ENCODE measurements at regions of chr19 and their contacts with region 1.

Region 1: GRCh38 chr19:41327576-41328156 is 17.7 kb downstream of the CCDC97 start:
- DNase-seq: peak in 2 of 5 donors; percentile 43 to 47
- H3K4me3 ChIP-seq: no peak overlapping the region
- H3K27ac ChIP-seq: no peak overlapping the region
- H3K4me1 ChIP-seq: peaks cover 25% of the 10 kb centered on the region
- H3K27me3 ChIP-seq: no peaks in the 10 kb centered on the region
- CTCF ChIP-seq: no peak
- EP300 ChIP-seq: no peak
- POLR2A ChIP-seq: no peak

Region 2: DNA sequence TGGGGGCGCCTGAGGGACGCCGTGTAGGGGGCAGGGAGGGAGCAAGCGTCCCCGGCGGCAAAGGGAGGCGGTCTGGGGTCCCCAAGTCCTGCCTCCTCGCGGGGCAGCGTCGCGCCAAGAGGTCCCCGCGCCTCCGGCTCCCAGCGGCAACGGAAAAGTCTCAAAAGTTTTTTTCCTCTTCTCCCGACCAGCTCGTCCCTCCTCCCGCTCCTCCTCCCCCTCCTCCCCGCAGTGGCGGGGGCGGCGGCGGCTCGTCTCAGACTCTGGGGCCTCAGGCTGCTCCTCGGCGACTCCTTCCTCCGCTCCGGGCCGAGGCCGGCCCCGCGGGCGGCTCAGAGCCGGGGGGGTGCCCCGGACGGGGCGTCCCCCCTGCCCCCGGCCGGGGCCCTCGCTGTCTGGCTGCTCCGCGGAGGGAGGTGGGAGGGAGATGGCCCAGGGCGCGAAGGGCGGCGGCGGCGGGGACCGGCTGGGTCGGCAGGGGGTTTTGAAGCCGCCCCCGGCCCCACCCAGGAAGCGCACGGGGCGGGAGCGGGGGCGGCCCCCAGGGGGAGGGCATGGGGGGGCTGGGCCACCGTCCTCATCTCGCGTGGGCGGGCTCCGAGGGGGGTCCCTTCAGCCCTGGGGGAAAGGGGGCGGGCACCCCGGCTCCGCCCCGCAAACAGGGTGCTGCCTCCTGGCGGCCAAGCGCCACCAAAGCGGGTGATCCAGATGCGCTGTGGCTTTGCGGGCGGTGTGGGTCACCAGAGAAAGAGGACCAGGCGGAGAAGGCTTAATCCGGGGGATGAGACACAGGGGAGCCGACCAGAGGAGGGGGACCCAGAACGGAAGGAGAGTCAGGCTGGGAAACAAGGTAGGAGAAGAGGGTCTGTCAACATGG is 26.0 kb after region 1 on chr19 and contains the start of gene TGFB1:
- intact Hi-C with region 1: loop called in 1 of 4 experiments (anchors 2 kb)
- DNase-seq: peak; percentile 80 to 89 (median 87)
- H3K4me3 ChIP-seq: peak within 1 kb of the TSS; percentile 60
- H3K27ac ChIP-seq: peak within 1 kb of the TSS; percentile 65 to 77
- H3K4me1 ChIP-seq: peaks cover 12% of the 10 kb centered on the region
- H3K27me3 ChIP-seq: no peaks in the 10 kb centered on the region
- CTCF ChIP-seq: peak; percentile 80 to 91 (median 89)
- EP300 ChIP-seq: no peak
- POLR2A ChIP-seq: peak; percentile 57
- total RNA-seq, gene TGFB1: 9.1 to 31.8 (median 22.1) TPM

Region 3: DNA sequence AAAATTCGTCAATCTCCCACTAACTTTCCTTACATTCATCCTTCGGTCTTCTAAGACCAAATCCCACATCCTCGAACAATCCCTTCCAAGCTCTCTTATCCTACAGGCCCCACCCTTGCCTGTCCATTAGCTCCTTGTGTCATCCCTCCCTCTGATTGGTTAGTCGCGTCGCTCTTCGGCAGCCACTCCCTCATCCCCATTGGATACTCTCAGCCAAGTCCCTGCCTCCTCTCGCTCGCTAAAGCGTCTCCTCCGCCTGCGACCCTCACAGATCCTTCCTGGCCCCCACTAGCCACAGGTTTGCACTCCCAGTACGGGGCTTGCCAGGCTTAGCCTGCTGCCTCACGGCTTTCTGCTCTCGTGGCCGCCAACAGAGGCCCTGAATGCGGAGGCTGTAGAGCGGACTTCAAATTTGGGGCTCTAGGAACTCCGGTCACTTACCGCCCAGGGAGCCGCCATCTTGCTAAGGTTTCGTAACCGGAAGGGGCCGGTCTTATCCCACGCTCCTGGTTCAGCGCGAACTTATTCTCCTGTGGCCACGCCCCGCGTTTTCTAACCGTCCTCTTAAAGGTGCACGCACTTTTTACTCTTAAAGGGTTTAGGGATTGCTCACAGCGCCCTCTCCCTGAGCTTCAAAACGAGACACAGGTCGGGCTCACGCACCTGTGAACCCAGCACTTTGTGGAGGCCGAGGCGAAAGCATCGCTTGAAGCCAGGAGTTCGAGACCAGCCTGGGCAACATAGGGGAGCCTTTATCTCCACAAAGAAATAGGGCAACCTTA is 112.0 kb after region 1 on chr19 and contains the start of gene DMAC2:
- intact Hi-C with region 1: loop called in 1 of 4 experiments (anchors 10 kb)
- DNase-seq: peak; percentile 89 to 97 (median 92)
- H3K4me3 ChIP-seq: peak within 1 kb of the TSS; percentile 91
- H3K27ac ChIP-seq: peak within 1 kb of the TSS; percentile 66 to 95
- H3K4me1 ChIP-seq: no peaks in the 10 kb centered on the region
- H3K27me3 ChIP-seq: no peaks in the 10 kb centered on the region
- CTCF ChIP-seq: no peak
- EP300 ChIP-seq: peak; percentile 17
- POLR2A ChIP-seq: peak; percentile 90
- total RNA-seq, gene DMAC2: 23.1 to 35.9 (median 33.1) TPM

Region 4: DNA sequence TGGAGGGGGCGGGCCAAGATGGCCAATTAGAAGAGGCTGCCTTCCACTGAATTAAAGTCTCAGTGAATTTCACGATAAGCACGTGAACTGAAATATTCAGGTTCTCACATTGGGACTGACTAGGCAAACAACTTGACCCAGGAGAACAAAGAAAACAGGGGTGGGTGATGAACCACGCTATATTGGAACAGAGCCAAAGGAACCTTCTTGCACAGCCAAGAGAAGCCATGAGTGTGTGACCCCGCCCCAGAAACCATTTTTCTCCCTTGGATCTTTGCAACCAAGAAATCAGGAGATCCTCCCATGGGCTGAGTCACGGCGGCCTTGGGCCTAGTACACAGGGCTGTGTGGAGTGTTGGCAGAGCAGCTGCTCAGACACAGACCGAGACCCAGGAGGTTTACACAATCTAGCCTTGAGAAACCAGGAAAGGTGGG is 152.1 kb after region 1 on chr19:
- intact Hi-C with region 1: no loop called
- DNase-seq: peak; percentile 68 to 86 (median 80)
- H3K4me3 ChIP-seq: no peak overlapping the region
- H3K27ac ChIP-seq: peak overlapping the region in 1 of 2 donors; percentile 85
- H3K4me1 ChIP-seq: no peaks in the 10 kb centered on the region
- H3K27me3 ChIP-seq: no peaks in the 10 kb centered on the region
- CTCF ChIP-seq: no peak
- EP300 ChIP-seq: no peak
- POLR2A ChIP-seq: no peak